Sigmoid colon (tissue), 7 donors: ENCODE measurements at regions of chr1 and their contacts with region 1.

Region 1: GRCh38 chr1:200802865-200803512 is 64.3 kb downstream of the CAMSAP2 start:
- DNase-seq: peak; percentile 89
- H3K4me3 ChIP-seq: no peak overlapping the region
- H3K27ac ChIP-seq: no peak overlapping the region
- H3K4me1 ChIP-seq: peaks cover 0 to 21% (median 8%) of the 10 kb centered on the region in 4 donors
- H3K27me3 ChIP-seq: no peaks in the 10 kb centered on the region
- CTCF ChIP-seq: peak; percentile 84 to 98 (median 90)
- EP300 ChIP-seq: no peak
- POLR2A ChIP-seq: no peak

Region 2: GRCh38 chr1:200669314-200670241 is 133.4 kb before region 1 on chr1 and contains the start of gene DDX59:
- intact Hi-C with region 1: loop called (anchors 2 kb)
- DNase-seq: peak; percentile 98
- H3K4me3 ChIP-seq: peak within 1 kb of the TSS; percentile 67 to 99 (median 79)
- H3K27ac ChIP-seq: peak within 1 kb of the TSS; percentile 95 to 100 (median 98)
- H3K4me1 ChIP-seq: peaks cover 6 to 27% (median 26%) of the 10 kb centered on the region in 4 donors
- H3K27me3 ChIP-seq: no peaks in the 10 kb centered on the region
- CTCF ChIP-seq: no peak
- EP300 ChIP-seq: peak; percentile 3 to 69 (median 40)
- POLR2A ChIP-seq: peak; percentile 83 to 87
- total RNA-seq, gene DDX59: 24.0 to 29.6 (median 27.1) TPM

Region 3: DNA sequence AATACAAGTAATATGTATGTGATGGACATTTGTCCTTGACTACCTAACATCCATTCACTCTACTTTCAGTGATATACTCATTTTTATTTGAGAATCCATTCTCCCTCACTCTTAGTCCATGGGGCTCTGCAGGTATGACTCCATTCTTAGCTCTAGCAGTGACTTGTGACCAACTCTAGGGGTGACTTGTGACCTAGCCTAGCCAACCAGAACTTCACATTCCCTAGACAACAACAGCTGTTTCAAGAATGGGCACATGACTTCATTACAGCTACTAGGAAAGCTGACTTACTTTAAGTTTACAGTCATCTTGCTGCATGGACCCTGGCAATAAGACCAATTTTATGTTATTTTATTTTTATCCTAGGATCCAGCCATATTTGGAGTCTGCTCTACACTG is 109.7 kb before region 1 on chr1:
- intact Hi-C with region 1: no loop called
- DNase-seq: no peak
- H3K4me3 ChIP-seq: no peak overlapping the region
- H3K27ac ChIP-seq: no peak overlapping the region
- H3K4me1 ChIP-seq: no peaks in the 10 kb centered on the region
- H3K27me3 ChIP-seq: no peaks in the 10 kb centered on the region
- CTCF ChIP-seq: no peak
- EP300 ChIP-seq: no peak
- POLR2A ChIP-seq: no peak